Posterior vena cava (tissue), 2 donors: ENCODE measurements at regions of chr1 and their contacts with region 1.

Region 1: DNA sequence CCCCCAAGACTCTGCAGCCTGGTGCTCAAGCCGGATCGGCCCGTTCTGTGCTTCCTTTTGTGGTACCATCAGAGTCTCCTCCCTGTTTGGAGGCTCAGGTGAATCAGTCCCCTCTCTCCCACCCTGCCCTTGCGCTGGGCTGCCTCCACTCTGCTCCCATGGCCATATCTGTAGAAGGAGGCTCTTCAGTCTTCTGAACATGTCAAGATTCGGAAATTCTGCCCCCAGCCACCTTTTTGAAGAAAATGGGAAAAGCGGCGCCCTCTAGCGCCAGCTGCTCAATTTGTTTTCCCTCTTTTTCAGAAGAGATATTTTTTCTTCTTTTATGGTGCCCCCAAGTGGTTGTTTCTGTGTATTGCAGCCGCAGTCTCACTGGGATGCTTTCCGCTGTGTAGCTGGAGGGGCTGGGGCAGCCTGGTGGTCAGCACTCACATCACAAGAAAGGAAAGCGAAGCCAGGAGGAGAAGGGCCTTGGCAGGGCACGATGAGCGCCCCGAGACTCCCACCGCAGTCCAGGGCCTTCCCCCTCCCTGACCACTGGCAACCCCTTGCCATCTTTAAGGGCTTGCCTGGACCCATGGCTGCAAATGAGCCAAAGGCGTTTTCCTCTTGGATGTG is 58.4 kb upstream of the CACNA1E start:
- DNase-seq: no peak

Region 2: GRCh38 chr1:180310095-180310494 is 1114.8 kb before region 1 on chr1:
- intact Hi-C with region 1: loop called in 1 of 2 experiments (anchors 10 kb)
- DNase-seq: no peak

Region 3: GRCh38 chr1:181189691-181190363 is 235.1 kb before region 1 on chr1:
- intact Hi-C with region 1: loop called (anchors 5 to 10 kb)
- DNase-seq: peak; percentile 90

Region 4: GRCh38 chr1:181469829-181470228 is 44.9 kb after region 1 on chr1:
- intact Hi-C with region 1: no loop called
- DNase-seq: no peak